ENCODE measurements at regions of chr10 and their contacts with region 1.

Region 1: GRCh38 chr10:459743-460142 is 229.7 kb downstream of the DIP2C start:
- DNase-seq: no peak
- H3K4me3 ChIP-seq: no peak overlapping the region
- H3K27me3 ChIP-seq: no peaks in the 10 kb centered on the region
- CTCF ChIP-seq: no peak

Region 2: GRCh38 chr10:794466-794865 is 334.7 kb after region 1 on chr10:
- CTCF ChIA-PET with region 1: no interaction called
- POLR2A ChIA-PET with region 1: interaction called, 17 read pairs
- DNase-seq: no peak
- H3K4me3 ChIP-seq: no peak overlapping the region
- H3K27me3 ChIP-seq: no peaks in the 10 kb centered on the region
- CTCF ChIP-seq: peak; percentile 59